Heart right ventricle (tissue), 16 donors: ENCODE measurements at regions of chr6 and their contacts with region 1.

Region 1: DNA sequence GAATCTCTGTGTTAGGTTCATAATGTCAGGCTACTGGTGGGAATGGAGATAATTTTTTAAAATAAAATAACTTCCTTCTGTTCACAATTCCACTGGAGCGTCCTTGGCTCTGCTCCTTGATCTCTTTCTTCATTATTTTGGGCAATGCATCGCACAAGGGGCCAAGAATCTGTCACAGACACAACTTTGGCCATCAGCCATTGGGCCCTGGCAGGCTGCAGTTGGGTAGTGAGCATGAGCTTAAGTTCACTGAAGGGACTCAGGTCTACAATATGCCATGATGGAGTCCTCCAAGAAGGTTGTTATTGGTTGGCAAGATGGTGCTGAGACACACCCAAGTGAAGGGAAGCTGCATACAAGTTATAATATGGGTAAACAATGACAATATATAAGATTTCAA is 40.0 kb downstream of the CYP39A1 start:
- DNase-seq: peak; percentile 48 to 56
- ATAC-seq: peak in 6 of 8 donors; percentile 47 to 89 (median 80)
- H3K4me3 ChIP-seq: no peak overlapping the region
- H3K27ac ChIP-seq: peak overlapping the region in 6 of 10 donors; percentile 9 to 56 (median 42)
- H3K4me1 ChIP-seq: peaks cover 0 to 16% (median 0%) of the 10 kb centered on the region in 9 donors
- H3K27me3 ChIP-seq: no peaks in the 10 kb centered on the region
- CTCF ChIP-seq: no peak

Region 2: DNA sequence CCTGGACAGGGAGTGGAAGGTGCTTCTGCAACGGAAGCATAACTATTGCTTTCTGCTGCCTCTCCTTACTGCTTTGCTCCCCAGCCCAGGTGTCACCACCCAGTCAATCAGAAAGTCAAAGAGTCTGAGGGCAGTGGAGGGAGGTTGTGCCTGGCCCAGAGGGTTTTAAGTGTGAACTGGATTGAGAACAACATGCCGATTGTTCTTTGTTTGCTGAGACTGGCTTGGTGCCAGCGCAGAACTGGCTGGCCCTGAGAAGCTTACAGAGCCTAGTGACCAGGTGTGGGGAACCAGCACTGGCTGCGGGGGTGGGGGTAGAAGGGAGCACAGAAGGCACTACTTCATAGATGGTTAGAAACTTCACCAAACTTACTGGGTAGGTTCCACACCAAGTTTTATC is 514.0 kb before region 1 on chr6:
- intact Hi-C with region 1: loop called in 1 of 10 experiments (anchors 5 kb)
- DNase-seq: peak; percentile 7 to 19
- ATAC-seq: peak in 5 of 8 donors; percentile 7 to 71 (median 45)
- H3K4me3 ChIP-seq: no peak overlapping the region
- H3K27ac ChIP-seq: no peak overlapping the region
- H3K4me1 ChIP-seq: peaks cover 0 to 10% (median 0%) of the 10 kb centered on the region in 9 donors
- H3K27me3 ChIP-seq: no peaks in the 10 kb centered on the region
- CTCF ChIP-seq: no peak

Region 3: DNA sequence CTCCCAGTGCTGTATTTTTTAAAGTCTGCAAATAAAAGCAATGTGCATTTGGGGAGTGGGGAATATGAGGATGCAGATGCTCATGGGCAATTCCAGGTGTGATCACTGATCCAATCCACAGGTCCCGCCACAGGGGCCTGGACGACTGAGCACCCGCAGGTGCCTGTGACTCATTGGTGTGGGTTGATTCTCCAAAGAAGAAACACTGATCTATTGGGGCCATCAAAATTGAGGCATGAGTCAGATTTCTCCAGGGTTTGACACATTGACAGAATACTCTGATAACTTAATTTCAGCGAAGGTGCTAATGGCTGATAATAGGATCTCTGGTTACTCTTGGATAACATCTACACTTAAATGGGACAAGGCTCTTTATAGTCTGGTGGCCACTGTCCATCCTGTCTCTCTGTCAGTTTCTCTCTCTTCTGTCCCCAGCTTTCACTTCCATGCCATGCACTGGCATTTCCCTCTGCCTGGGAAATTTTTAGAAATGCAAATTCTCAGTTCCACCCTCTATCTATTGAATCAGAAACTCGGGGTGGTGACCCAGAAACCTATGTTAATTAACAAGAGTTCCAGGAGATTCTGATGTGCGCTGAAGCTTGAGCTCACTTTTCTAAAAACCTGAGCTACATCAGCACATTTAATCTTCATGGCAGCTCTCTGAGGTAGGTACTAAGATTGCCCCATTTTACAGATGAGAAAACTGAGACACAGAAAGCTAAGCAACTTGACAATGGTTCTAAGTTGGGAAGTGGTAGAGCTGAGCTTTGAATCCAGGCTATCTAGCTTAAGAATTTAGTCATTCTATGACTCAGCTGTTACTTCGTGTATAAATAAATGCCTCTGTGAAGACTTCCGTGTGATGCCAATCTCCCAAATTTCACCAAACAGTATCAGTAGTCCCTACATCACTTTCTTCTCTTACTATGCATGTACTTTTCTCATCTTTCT is 111.2 kb before region 1 on chr6:
- intact Hi-C with region 1: loop called in 3 of 10 experiments (anchors 5 to 10 kb)
- DNase-seq: no peak
- ATAC-seq: no peak
- H3K4me3 ChIP-seq: no peak overlapping the region
- H3K27ac ChIP-seq: peak overlapping the region in 7 of 10 donors; percentile 10 to 84 (median 66)
- H3K4me1 ChIP-seq: peaks cover 0 to 43% (median 4%) of the 10 kb centered on the region in 9 donors
- H3K27me3 ChIP-seq: peaks cover 0 to 4% (median 0%) of the 10 kb centered on the region in 7 donors
- CTCF ChIP-seq: no peak

Region 4: DNA sequence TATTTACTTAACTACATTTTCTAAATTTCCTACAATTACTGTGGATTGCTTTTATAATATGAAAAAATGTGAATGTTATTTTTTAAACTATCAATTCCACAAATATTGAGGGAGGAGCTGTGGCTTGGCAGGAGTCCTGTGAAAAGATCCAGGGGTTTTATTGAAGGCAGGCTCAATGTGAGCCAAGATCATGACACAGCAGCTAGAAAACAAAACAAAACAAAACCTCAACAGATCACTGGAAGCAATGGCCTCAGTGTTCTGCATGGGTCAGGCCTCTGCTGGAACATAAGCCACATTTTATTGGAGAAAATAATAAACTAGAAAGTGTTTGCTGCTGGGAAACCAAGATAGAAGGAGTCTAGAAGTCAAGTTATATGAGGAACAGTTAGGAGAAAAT is 102.0 kb before region 1 on chr6:
- intact Hi-C with region 1: loop called in 3 of 10 experiments (anchors 5 to 10 kb)
- DNase-seq: peak in 1 of 2 donors; percentile 54
- ATAC-seq: peak in 6 of 8 donors; percentile 23 to 77 (median 63)
- H3K4me3 ChIP-seq: no peak overlapping the region
- H3K27ac ChIP-seq: peak overlapping the region; percentile 48 to 85 (median 80)
- H3K4me1 ChIP-seq: peaks cover 3 to 82% (median 61%) of the 10 kb centered on the region in 9 donors
- H3K27me3 ChIP-seq: no peaks in the 10 kb centered on the region
- CTCF ChIP-seq: no peak

Region 5: DNA sequence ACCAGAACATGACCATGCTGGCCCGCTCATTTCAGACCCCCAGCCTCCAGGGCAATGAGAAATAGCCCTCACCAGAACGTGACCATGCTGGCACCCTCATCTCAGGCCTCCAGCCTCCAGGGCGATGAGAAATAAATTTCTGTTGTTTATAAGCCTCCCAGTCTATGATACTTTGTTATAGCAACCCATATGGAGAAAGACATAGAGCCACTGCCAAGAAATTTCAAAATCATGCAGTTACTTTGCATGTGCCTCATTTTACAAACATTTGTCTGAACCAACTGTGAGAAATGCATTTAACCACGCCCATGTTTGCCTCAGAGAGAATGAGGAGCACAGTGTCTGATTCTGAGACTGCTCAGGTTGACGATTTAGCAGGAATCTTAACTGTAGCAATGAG is 24.5 kb after region 1 on chr6:
- intact Hi-C with region 1: no loop called
- DNase-seq: no peak
- ATAC-seq: peak in 1 of 8 donors; percentile 27
- H3K4me3 ChIP-seq: no peak overlapping the region
- H3K27ac ChIP-seq: no peak overlapping the region
- H3K4me1 ChIP-seq: peaks cover 0 to 6% (median 0%) of the 10 kb centered on the region in 9 donors
- H3K27me3 ChIP-seq: no peaks in the 10 kb centered on the region
- CTCF ChIP-seq: no peak